ENCODE measurements at regions of chr11 and their contacts with region 1.

Region 1: GRCh38 chr11:47269002-47269828 is 718 bp upstream of the MADD start:
- DNase-seq: peak; percentile 73 to 93 (median 85)
- ATAC-seq: peak; percentile 57
- H3K4me3 ChIP-seq: peak overlapping the region; percentile 71
- H3K4me3 Mint-ChIP-seq: peak overlapping the region; percentile 88
- H3K27ac ChIP-seq: peak overlapping the region; percentile 72 to 92
- H3K27ac Mint-ChIP-seq: peak overlapping the region; percentile 94
- H3K4me1 ChIP-seq: peaks cover 43% of the 10 kb centered on the region
- H3K4me1 Mint-ChIP-seq: peaks cover 53% of the 10 kb centered on the region
- H3K27me3 ChIP-seq: no peaks in the 10 kb centered on the region
- H3K27me3 Mint-ChIP-seq: no peaks in the 10 kb centered on the region
- CTCF ChIP-seq: peak; percentile 4

Region 2: DNA sequence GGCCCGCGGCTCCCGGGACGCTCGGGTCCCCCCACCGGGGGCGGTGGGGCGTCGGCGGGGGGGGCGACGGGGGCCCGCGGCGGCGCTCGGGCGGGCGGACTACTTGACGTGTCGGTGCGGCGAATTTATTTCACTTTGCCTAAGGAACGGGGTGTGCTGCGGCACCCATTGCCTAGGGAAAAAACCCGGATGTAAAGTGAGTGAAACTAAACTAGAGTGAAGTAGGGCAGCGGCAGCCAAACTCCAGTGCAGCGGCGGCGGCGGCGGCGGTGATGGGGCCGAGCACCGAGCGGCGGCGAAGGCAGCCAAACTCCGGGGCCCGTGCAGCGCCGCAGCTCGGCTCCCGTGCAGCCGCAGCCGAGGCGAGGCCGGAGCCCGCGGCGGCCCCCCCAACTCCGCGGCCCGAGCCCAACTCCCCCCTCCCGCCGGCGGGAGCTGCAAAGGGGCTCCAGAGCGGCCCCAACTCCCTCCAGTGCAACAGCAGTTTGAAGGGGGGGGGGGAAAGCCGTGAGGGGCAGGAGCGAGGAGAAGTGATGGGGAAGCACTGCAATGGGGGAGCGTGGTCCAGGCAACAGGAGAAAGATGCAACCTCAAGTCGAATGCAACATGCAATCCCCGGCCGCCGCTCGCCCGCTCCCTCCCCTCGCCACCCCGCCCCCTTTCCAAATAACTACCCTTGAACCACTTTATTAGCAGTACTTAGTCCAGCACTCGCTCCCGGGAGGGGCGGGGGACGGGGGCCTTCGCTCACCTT is 1147.3 kb before region 1 on chr11:
- CTCF ChIA-PET with region 1: no interaction called
- POLR2A ChIA-PET with region 1: no interaction called
- intact Hi-C with region 1: loop called in 1 of 2 experiments (anchors 2 kb)
- DNase-seq: peak; percentile 50 to 92 (median 73)
- ATAC-seq: peak; percentile 54
- H3K4me3 ChIP-seq: peak overlapping the region; percentile 58 to 63
- H3K4me3 Mint-ChIP-seq: peak overlapping the region; percentile 88
- H3K27ac ChIP-seq: peak overlapping the region; percentile 1 to 26
- H3K27ac Mint-ChIP-seq: peak overlapping the region; percentile 96
- H3K4me1 ChIP-seq: peaks cover 30% of the 10 kb centered on the region
- H3K4me1 Mint-ChIP-seq: peaks cover 33% of the 10 kb centered on the region
- H3K27me3 ChIP-seq: no peaks in the 10 kb centered on the region
- H3K27me3 Mint-ChIP-seq: no peaks in the 10 kb centered on the region
- CTCF ChIP-seq: no peak

Region 3: GRCh38 chr11:47083913-47084312 is 185.3 kb before region 1 on chr11:
- CTCF ChIA-PET with region 1: no interaction called
- POLR2A ChIA-PET with region 1: no interaction called
- intact Hi-C with region 1: no loop called
- DNase-seq: no peak
- ATAC-seq: no peak
- H3K4me3 ChIP-seq: no peak overlapping the region
- H3K4me3 Mint-ChIP-seq: no peak overlapping the region
- H3K27ac ChIP-seq: no peak overlapping the region
- H3K27ac Mint-ChIP-seq: no peak overlapping the region
- H3K4me1 ChIP-seq: no peaks in the 10 kb centered on the region
- H3K4me1 Mint-ChIP-seq: peaks cover 4% of the 10 kb centered on the region
- H3K27me3 ChIP-seq: no peaks in the 10 kb centered on the region
- H3K27me3 Mint-ChIP-seq: no peaks in the 10 kb centered on the region
- CTCF ChIP-seq: no peak

Region 4: GRCh38 chr11:47233989-47234668 is 35.1 kb before region 1 on chr11:
- CTCF ChIA-PET with region 1: interaction called, 4 read pairs
- POLR2A ChIA-PET with region 1: interaction called, 3 read pairs
- intact Hi-C with region 1: loop called in 1 of 2 experiments (anchors 5 kb)
- DNase-seq: peak in 4 of 9 experiments; percentile 27 to 64 (median 37)
- ATAC-seq: peak; percentile 10
- H3K4me3 ChIP-seq: peak overlapping the region in 1 of 2 experiments; percentile 50
- H3K4me3 Mint-ChIP-seq: peak overlapping the region; percentile 74
- H3K27ac ChIP-seq: peak overlapping the region; percentile 65 to 72
- H3K27ac Mint-ChIP-seq: peak overlapping the region; percentile 94
- H3K4me1 ChIP-seq: peaks cover 24% of the 10 kb centered on the region
- H3K4me1 Mint-ChIP-seq: peaks cover 19% of the 10 kb centered on the region
- H3K27me3 ChIP-seq: no peaks in the 10 kb centered on the region
- H3K27me3 Mint-ChIP-seq: no peaks in the 10 kb centered on the region
- CTCF ChIP-seq: no peak

Region 5: DNA sequence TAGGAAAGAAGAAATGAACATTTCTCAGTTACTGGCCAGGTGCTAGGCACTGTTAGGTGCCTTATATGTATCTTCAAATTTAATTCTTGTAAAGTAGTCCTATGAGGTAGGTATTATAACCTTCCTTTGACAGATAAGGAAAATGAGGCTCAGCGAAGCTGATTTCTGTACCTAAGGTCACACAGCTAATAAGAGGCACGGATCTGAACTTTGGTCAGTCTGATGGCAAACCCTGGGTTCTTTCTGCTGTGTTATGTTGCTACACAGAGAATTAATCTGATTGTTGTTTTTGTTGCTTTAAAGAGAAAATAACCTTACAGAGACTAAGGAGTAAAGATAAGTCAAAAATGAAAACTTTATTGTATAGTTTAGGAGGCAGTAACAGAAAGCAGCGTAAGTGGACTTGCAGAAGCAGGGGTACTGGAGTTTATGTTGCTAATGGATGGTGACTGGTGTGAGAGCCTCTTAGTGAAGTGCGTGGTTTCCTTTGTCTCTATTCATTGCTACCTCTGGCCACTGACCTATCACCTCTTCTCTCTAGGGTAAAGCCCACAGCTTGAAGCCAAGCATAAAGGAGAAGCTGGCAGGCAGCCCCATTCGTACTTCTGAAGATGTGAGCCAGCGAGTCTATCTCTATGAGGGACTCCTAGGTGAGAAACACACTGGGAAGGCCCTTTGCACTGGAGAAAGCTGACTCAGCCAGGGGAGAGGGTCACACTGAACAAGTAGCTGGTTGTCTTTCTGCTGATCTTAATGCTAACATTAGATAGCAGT is 39.0 kb after region 1 on chr11:
- CTCF ChIA-PET with region 1: no interaction called
- POLR2A ChIA-PET with region 1: no interaction called
- intact Hi-C with region 1: no loop called
- DNase-seq: no peak
- ATAC-seq: no peak
- H3K4me3 ChIP-seq: no peak overlapping the region
- H3K4me3 Mint-ChIP-seq: no peak overlapping the region
- H3K27ac ChIP-seq: no peak overlapping the region
- H3K27ac Mint-ChIP-seq: no peak overlapping the region
- H3K4me1 ChIP-seq: no peaks in the 10 kb centered on the region
- H3K4me1 Mint-ChIP-seq: no peaks in the 10 kb centered on the region
- H3K27me3 ChIP-seq: no peaks in the 10 kb centered on the region
- H3K27me3 Mint-ChIP-seq: no peaks in the 10 kb centered on the region
- CTCF ChIP-seq: no peak

Region 6: GRCh38 chr11:47426061-47426956 is 157.1 kb after region 1 on chr11 and contains the start of gene PSMC3:
- CTCF ChIA-PET with region 1: no interaction called
- POLR2A ChIA-PET with region 1: interaction called, 3 read pairs
- intact Hi-C with region 1: loop called (anchors 1 kb)
- DNase-seq: peak; percentile 96 to 99 (median 98)
- ATAC-seq: peak; percentile 98
- H3K4me3 ChIP-seq: peak within 1 kb of the TSS; percentile 68 to 98
- H3K4me3 Mint-ChIP-seq: peak within 1 kb of the TSS; percentile 100
- H3K27ac ChIP-seq: peak within 1 kb of the TSS; percentile 77 to 81
- H3K27ac Mint-ChIP-seq: peak within 1 kb of the TSS; percentile 98
- H3K4me1 ChIP-seq: peaks cover 14% of the 10 kb centered on the region
- H3K4me1 Mint-ChIP-seq: peaks cover 28% of the 10 kb centered on the region
- H3K27me3 ChIP-seq: no peaks in the 10 kb centered on the region
- H3K27me3 Mint-ChIP-seq: no peaks in the 10 kb centered on the region
- CTCF ChIP-seq: no peak
- total RNA-seq, gene PSMC3: 58.1 to 63.4 TPM

Region 7: DNA sequence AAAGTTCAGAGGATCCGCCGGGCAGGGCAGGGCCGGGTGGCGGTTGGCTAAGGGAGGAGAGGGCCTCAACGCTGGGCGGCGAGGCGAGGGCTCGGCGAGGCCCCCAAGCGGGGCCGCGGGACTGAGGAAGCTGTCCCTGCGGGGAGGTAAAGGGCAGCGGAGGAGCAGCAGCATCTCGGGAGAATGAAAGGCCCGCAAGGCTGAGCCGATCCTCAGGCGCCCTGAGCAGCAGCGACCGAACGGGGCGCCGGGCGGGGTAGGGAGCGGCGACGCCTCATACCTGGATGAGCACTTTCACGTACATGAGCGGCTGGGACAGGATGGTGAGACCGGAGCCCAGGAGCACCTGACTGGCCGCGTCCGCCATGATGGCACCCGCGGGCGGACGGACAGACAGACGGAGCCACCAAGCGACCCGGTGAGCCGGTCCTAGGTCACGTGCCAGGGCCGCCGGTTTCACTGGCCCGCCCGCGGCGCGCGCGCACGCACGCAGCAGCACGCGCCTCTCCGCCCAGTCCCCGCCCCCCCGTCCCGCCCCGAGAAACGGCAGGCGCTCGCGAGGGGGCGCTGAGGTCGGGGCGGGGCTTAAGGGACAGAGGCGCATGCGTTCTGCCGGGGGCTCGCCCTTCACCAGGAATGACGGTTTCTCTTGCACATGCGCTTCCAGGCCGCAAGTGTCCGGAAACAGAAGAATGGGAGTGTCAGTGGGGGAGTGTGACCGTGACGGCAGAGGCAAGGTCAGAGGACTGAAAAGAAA is 373.1 kb after region 1 on chr11 and contains the start of gene MTCH2:
- CTCF ChIA-PET with region 1: no interaction called
- POLR2A ChIA-PET with region 1: no interaction called
- intact Hi-C with region 1: loop called (anchors 2 to 5 kb)
- DNase-seq: peak; percentile 91 to 98 (median 95)
- ATAC-seq: peak; percentile 95
- H3K4me3 ChIP-seq: peak within 1 kb of the TSS; percentile 42 to 91
- H3K4me3 Mint-ChIP-seq: peak within 1 kb of the TSS; percentile 96
- H3K27ac ChIP-seq: peak within 1 kb of the TSS; percentile 55 to 96
- H3K27ac Mint-ChIP-seq: peak within 1 kb of the TSS; percentile 97
- H3K4me1 ChIP-seq: peaks cover 18% of the 10 kb centered on the region
- H3K4me1 Mint-ChIP-seq: peaks cover 32% of the 10 kb centered on the region
- H3K27me3 ChIP-seq: no peaks in the 10 kb centered on the region
- H3K27me3 Mint-ChIP-seq: no peaks in the 10 kb centered on the region
- CTCF ChIP-seq: no peak
- total RNA-seq, gene MTCH2: 16.4 to 19.5 TPM

Region 8: GRCh38 chr11:47715082-47715669 is 446.0 kb after region 1 on chr11 and contains the start of gene AGBL2:
- CTCF ChIA-PET with region 1: no interaction called
- POLR2A ChIA-PET with region 1: no interaction called
- intact Hi-C with region 1: no loop called
- DNase-seq: peak; percentile 70 to 91 (median 86)
- ATAC-seq: peak; percentile 99
- H3K4me3 ChIP-seq: peak within 1 kb of the TSS; percentile 66 to 88
- H3K4me3 Mint-ChIP-seq: peak within 1 kb of the TSS; percentile 96
- H3K27ac ChIP-seq: peak within 1 kb of the TSS; percentile 81 to 88
- H3K27ac Mint-ChIP-seq: peak within 1 kb of the TSS; percentile 94
- H3K4me1 ChIP-seq: peaks cover 14% of the 10 kb centered on the region
- H3K4me1 Mint-ChIP-seq: peaks cover 21% of the 10 kb centered on the region
- H3K27me3 ChIP-seq: no peaks in the 10 kb centered on the region
- H3K27me3 Mint-ChIP-seq: no peaks in the 10 kb centered on the region
- CTCF ChIP-seq: no peak
- total RNA-seq, gene AGBL2: 3.6 to 5.0 TPM

Region 9: DNA sequence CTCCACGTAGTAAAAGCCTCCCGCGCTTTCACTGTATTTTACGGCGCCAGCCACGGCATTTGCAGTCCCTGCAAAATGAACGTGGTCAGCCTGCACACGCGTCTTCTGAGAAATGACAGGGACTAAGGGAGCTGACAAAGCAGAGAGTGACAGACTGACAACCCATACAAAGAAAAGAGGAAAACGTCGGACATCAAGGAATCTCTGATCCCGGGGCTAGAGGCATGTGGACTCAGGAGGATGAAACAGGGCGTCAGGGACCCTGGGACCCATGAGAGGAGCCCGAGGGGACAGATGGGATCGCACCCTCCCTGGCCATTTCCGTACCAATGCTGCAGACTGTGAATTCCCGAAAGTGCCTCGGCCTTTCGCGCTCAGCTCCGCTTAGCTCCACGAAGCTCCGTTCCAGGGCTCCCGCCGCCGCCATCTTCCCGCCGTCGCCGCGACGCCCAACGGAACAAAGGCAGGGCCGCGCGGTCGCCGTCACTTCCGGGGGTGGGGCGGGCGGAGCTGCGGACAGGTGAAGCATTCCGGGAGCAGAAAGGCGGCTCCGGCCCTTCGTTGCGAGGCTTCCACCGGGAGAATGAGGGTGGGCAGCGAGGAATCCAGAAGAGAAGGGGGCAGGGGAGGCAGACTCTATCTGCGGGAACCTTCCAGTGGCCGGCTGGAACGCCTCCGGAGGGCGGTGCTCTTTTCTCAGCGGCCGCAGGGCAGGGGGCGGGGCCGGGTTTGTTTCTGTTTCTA is 578.8 kb after region 1 on chr11 and contains the start of gene NUP160:
- CTCF ChIA-PET with region 1: no interaction called
- POLR2A ChIA-PET with region 1: no interaction called
- intact Hi-C with region 1: loop called in 1 of 2 experiments (anchors 5 kb)
- DNase-seq: peak; percentile 70 to 92 (median 88)
- ATAC-seq: peak; percentile 87
- H3K4me3 ChIP-seq: peak within 1 kb of the TSS; percentile 89 to 99
- H3K4me3 Mint-ChIP-seq: peak within 1 kb of the TSS; percentile 100
- H3K27ac ChIP-seq: peak within 1 kb of the TSS; percentile 88 to 95
- H3K27ac Mint-ChIP-seq: peak within 1 kb of the TSS; percentile 99
- H3K4me1 ChIP-seq: peaks cover 35% of the 10 kb centered on the region
- H3K4me1 Mint-ChIP-seq: peaks cover 45% of the 10 kb centered on the region
- H3K27me3 ChIP-seq: no peaks in the 10 kb centered on the region
- H3K27me3 Mint-ChIP-seq: no peaks in the 10 kb centered on the region
- CTCF ChIP-seq: no peak
- total RNA-seq, gene NUP160: 38.6 to 46.6 TPM

Measured in CD8-positive, alpha-beta T cell (primary cell).